ENCODE measurements at regions of chr2 and their contacts with region 1.

Region 1: GRCh38 chr2:150601280-150602038 is 114.0 kb upstream of the RND3 start:
- DNase-seq: no peak
- ATAC-seq: no peak
- H3K4me3 ChIP-seq: no peak overlapping the region
- H3K27ac ChIP-seq: no peak overlapping the region
- H3K4me1 ChIP-seq: peaks cover 0 to 5% (median 0%) of the 10 kb centered on the region in 9 donors
- H3K27me3 ChIP-seq: no peaks in the 10 kb centered on the region
- CTCF ChIP-seq: no peak

Region 2: GRCh38 chr2:150624001-150624401 is 22.5 kb after region 1 on chr2:
- intact Hi-C with region 1: no loop called
- DNase-seq: no peak
- ATAC-seq: peak in 4 of 8 donors; percentile 26 to 43 (median 30)
- H3K4me3 ChIP-seq: no peak overlapping the region
- H3K27ac ChIP-seq: no peak overlapping the region
- H3K4me1 ChIP-seq: peaks cover 0 to 43% (median 26%) of the 10 kb centered on the region in 9 donors
- H3K27me3 ChIP-seq: no peaks in the 10 kb centered on the region
- CTCF ChIP-seq: no peak

Region 3: DNA sequence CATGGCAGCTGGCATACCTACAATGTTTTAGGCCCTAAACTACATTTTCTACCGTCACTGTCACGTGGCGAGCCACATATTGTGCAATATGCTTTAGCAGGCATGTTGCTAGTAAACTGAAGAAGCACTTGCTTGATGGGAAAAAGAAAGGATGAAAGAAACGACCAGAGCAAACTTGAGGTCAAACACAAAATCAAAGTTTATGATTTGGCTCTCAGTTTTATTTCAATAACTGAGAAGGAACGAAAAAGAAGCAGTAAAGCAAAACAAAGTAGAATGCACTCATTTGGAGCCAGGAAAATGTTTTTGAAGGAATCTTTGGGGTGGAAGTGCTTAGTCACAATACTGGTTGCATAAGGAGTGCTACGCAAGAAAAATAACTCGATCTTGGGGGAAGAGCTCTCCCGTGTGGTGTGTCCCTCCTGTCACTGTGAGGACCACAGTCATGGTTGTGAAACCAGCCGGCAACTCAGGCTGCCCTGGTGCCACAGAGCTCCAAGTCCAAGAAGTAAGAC is 310.4 kb after region 1 on chr2:
- intact Hi-C with region 1: loop called in 2 of 10 experiments (anchors 10 kb)
- DNase-seq: peak; percentile 18 to 24
- ATAC-seq: peak; percentile 72 to 98 (median 89)
- H3K4me3 ChIP-seq: no peak overlapping the region
- H3K27ac ChIP-seq: peak overlapping the region in 6 of 10 donors; percentile 25 to 67 (median 43)
- H3K4me1 ChIP-seq: peaks cover 0 to 8% (median 0%) of the 10 kb centered on the region in 9 donors
- H3K27me3 ChIP-seq: no peaks in the 10 kb centered on the region
- CTCF ChIP-seq: peak in 6 of 9 donors; percentile 19 to 53 (median 36)

Measured in heart right ventricle (tissue), 16 donors.